Panc1 (cell line): ENCODE measurements at regions of chr10 and their contacts with region 1.

Region 1: GRCh38 chr10:454860-455259 is 234.6 kb downstream of the DIP2C start:
- DNase-seq: peak; percentile 54
- ATAC-seq: peak; percentile 96
- H3K4me3 ChIP-seq: no peak overlapping the region
- H3K27ac ChIP-seq: no peak overlapping the region
- H3K4me1 ChIP-seq: peaks cover 13% of the 10 kb centered on the region
- H3K27me3 ChIP-seq: no peaks in the 10 kb centered on the region
- CTCF ChIP-seq: no peak

Region 2: DNA sequence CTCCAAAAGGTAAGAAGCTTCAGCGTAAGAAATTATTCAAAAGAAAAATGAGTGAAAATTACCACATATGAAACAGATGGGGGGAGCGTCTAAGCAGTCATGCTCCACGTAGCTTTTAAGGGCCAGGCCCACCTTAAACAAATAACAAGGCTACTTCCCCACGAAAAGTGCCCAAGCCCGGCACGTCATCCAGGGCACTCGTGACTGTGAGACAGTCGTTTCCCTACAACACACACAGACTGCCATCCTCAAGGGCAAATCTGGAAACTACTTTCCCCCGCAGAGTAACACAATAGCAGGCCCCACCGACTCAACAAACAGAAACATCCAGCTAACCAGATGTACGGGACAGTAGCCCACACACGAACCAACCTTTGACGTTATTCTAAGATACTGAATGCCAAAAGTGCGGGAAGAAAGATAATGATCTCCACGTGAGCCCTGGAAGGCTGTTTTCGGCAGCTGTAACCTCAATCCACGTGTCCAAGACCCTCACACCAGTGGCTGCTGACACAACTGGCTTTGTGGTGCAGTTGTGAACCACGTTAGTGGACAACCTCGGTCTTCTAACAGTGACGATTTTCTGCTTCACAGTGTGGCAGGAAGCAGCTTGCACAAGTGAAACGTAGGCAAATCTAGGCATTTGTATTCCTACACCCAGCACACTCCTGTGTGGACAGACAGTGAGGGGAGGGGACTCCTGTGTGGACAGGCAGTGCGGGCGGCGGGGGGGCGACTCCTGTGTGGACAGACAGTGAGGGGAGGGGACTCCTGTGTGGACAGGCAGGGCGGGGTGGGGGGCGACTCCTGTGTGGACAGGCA is 67.9 kb before region 1 on chr10:
- CTCF ChIA-PET with region 1: no interaction called
- POLR2A ChIA-PET with region 1: interaction called, 11 read pairs
- in situ Hi-C with region 1: no loop called
- intact Hi-C with region 1: no loop called
- DNase-seq: no peak
- ATAC-seq: no peak
- H3K4me3 ChIP-seq: no peak overlapping the region
- H3K27ac ChIP-seq: no peak overlapping the region
- H3K4me1 ChIP-seq: no peaks in the 10 kb centered on the region
- H3K27me3 ChIP-seq: no peaks in the 10 kb centered on the region
- CTCF ChIP-seq: no peak

Region 3: GRCh38 chr10:494149-494542 is 39.3 kb after region 1 on chr10:
- CTCF ChIA-PET with region 1: no interaction called
- POLR2A ChIA-PET with region 1: no interaction called
- in situ Hi-C with region 1: no loop called
- intact Hi-C with region 1: no loop called
- DNase-seq: no peak
- ATAC-seq: no peak
- H3K4me3 ChIP-seq: no peak overlapping the region
- H3K27ac ChIP-seq: no peak overlapping the region
- H3K4me1 ChIP-seq: no peaks in the 10 kb centered on the region
- H3K27me3 ChIP-seq: no peaks in the 10 kb centered on the region
- CTCF ChIP-seq: no peak